Natural killer cell (primary cell): ENCODE measurements at regions of chr22 and their contacts with region 1.

Region 1: GRCh38 chr22:40055143-40055883 is 60.6 kb downstream of the FAM83F start:
- DNase-seq: peak in 1 of 2 donors; percentile 72
- ATAC-seq: peak; percentile 62 to 80 (median 72)
- H3K4me3 ChIP-seq: no peak overlapping the region
- H3K4me3 Mint-ChIP-seq: peak overlapping the region; percentile 57
- H3K27ac ChIP-seq: peak overlapping the region; percentile 4
- H3K27ac Mint-ChIP-seq: peak overlapping the region; percentile 62 to 79
- H3K4me1 ChIP-seq: peaks cover 44% of the 10 kb centered on the region
- H3K4me1 Mint-ChIP-seq: peaks cover 60 to 65% of the 10 kb centered on the region in 2 donors
- H3K27me3 ChIP-seq: no peaks in the 10 kb centered on the region
- H3K27me3 Mint-ChIP-seq: no peaks in the 10 kb centered on the region
- CTCF ChIP-seq: no peak

Region 2: DNA sequence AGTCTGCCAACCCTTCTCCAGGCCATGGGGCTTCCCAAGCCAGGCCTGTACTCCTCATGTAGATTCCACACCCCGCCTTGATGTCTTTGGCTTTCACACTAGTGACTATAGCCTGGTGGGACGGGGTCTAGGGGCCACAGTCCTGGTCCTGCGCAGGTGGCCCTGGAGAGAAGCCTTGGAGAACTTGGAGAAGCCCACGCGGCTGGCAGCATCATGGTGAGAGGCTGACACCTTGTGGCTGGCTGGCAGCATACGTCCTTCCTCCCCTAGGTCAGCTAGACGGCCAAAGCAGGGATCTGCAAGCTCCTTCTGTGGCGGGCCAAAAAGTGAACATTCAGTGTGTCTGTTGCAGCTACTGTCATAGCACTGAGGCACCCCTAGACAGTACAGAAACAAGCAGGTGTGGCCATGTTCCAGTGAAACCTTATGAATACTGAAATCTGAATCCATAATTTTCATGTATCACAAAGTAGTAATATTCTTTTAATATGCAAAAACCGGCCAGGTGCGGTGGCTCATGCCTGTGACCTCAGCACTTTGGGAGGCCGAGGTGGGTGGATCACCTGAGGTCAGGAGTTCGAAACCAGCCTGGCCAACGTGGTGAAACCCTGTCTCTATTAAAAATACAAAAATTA is 18.6 kb before region 1 on chr22:
- intact Hi-C with region 1: no loop called
- DNase-seq: peak; percentile 33 to 74
- ATAC-seq: peak; percentile 59 to 85 (median 80)
- H3K4me3 ChIP-seq: no peak overlapping the region
- H3K4me3 Mint-ChIP-seq: no peak overlapping the region
- H3K27ac ChIP-seq: no peak overlapping the region
- H3K27ac Mint-ChIP-seq: no peak overlapping the region
- H3K4me1 ChIP-seq: no peaks in the 10 kb centered on the region
- H3K4me1 Mint-ChIP-seq: no peaks in the 10 kb centered on the region
- H3K27me3 ChIP-seq: no peaks in the 10 kb centered on the region
- H3K27me3 Mint-ChIP-seq: peaks cover 27% of the 10 kb centered on the region in 2 donors
- CTCF ChIP-seq: peak; percentile 63

Region 3: GRCh38 chr22:40107851-40108378 is 52.6 kb after region 1 on chr22:
- intact Hi-C with region 1: loop called (anchors 10 kb)
- DNase-seq: peak in 1 of 2 donors; percentile 31
- ATAC-seq: peak; percentile 69 to 86 (median 69)
- H3K4me3 ChIP-seq: peak overlapping the region; percentile 19
- H3K4me3 Mint-ChIP-seq: peak overlapping the region; percentile 88
- H3K27ac ChIP-seq: peak overlapping the region; percentile 49
- H3K27ac Mint-ChIP-seq: peak overlapping the region; percentile 83 to 85
- H3K4me1 ChIP-seq: peaks cover 13% of the 10 kb centered on the region
- H3K4me1 Mint-ChIP-seq: peaks cover 70 to 77% of the 10 kb centered on the region in 2 donors
- H3K27me3 ChIP-seq: no peaks in the 10 kb centered on the region
- H3K27me3 Mint-ChIP-seq: no peaks in the 10 kb centered on the region
- CTCF ChIP-seq: no peak

Region 4: DNA sequence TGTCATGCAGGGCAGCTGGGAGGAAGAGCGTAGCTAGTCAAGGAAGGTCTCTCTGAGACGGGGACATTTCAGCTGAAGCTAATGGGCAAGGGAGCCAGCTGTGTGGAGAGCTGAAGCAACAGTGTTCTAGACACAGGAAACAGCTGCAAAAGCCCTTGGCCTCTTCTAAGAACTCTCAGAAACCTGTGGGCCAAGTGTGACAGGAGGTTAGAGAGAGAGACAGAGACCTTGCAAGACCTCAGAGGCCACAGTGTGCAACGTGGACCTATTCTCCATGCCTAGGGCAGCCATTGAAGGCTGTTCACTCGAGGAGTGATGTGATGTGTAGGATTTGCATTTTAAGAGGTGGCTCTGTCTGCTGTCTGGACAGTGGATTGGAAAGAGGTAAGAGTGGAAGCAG is 73.7 kb after region 1 on chr22:
- intact Hi-C with region 1: loop called (anchors 5 kb)
- DNase-seq: peak; percentile 39 to 51
- ATAC-seq: peak; percentile 89 to 95 (median 94)
- H3K4me3 ChIP-seq: no peak overlapping the region
- H3K4me3 Mint-ChIP-seq: peak overlapping the region; percentile 66
- H3K27ac ChIP-seq: peak overlapping the region; percentile 44
- H3K27ac Mint-ChIP-seq: peak overlapping the region; percentile 65 to 86
- H3K4me1 ChIP-seq: peaks cover 22% of the 10 kb centered on the region
- H3K4me1 Mint-ChIP-seq: peaks cover 31 to 45% of the 10 kb centered on the region in 2 donors
- H3K27me3 ChIP-seq: no peaks in the 10 kb centered on the region
- H3K27me3 Mint-ChIP-seq: no peaks in the 10 kb centered on the region
- CTCF ChIP-seq: no peak

Region 5: DNA sequence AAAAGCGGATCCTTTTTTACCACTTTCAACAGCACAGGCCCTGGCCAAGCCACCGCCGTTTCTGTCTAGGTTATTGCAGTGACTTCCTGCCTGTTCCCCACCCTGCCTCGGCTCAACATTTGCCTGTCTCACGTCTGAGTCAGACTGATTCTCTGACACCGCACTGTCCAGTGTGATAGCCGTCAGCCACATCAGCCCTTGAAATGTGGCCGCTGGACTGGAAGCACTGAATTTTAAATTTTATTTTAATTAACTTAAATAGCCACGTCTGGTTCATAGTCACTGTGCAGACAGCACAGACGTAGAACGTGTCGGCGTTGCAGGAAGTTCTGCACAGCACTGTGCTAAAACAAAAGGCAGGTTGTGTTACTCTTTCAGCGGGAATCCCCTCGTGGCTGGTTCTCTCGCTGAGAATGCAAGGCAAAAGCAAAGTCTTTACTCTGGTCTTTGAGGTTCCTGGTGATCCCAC is 234.7 kb after region 1 on chr22:
- intact Hi-C with region 1: loop called (anchors 5 kb)
- DNase-seq: peak; percentile 60 to 91
- ATAC-seq: peak; percentile 87 to 93 (median 90)
- H3K4me3 ChIP-seq: no peak overlapping the region
- H3K4me3 Mint-ChIP-seq: peak overlapping the region; percentile 75
- H3K27ac ChIP-seq: peak overlapping the region; percentile 81
- H3K27ac Mint-ChIP-seq: peak overlapping the region; percentile 91 to 93
- H3K4me1 ChIP-seq: peaks cover 24% of the 10 kb centered on the region
- H3K4me1 Mint-ChIP-seq: peaks cover 24 to 31% of the 10 kb centered on the region in 2 donors
- H3K27me3 ChIP-seq: no peaks in the 10 kb centered on the region
- H3K27me3 Mint-ChIP-seq: no peaks in the 10 kb centered on the region
- CTCF ChIP-seq: no peak

Region 6: GRCh38 chr22:40346178-40347118 is 291.1 kb after region 1 on chr22 and contains the start of gene ADSL:
- intact Hi-C with region 1: loop called (anchors 5 kb)
- DNase-seq: peak; percentile 74 to 90
- ATAC-seq: peak; percentile 89 to 93 (median 91)
- H3K4me3 ChIP-seq: peak within 1 kb of the TSS; percentile 76
- H3K4me3 Mint-ChIP-seq: peak within 1 kb of the TSS; percentile 98
- H3K27ac ChIP-seq: peak within 1 kb of the TSS; percentile 65
- H3K27ac Mint-ChIP-seq: peak within 1 kb of the TSS; percentile 89
- H3K4me1 ChIP-seq: peaks cover 25% of the 10 kb centered on the region
- H3K4me1 Mint-ChIP-seq: peaks cover 23 to 29% of the 10 kb centered on the region in 2 donors
- H3K27me3 ChIP-seq: no peaks in the 10 kb centered on the region
- H3K27me3 Mint-ChIP-seq: no peaks in the 10 kb centered on the region
- CTCF ChIP-seq: no peak
- total RNA-seq, gene ADSL: 31.3 to 49.8 (median 41.2) TPM